ENCODE measurements at regions of chr10 and their contacts with region 1.

Region 1: DNA sequence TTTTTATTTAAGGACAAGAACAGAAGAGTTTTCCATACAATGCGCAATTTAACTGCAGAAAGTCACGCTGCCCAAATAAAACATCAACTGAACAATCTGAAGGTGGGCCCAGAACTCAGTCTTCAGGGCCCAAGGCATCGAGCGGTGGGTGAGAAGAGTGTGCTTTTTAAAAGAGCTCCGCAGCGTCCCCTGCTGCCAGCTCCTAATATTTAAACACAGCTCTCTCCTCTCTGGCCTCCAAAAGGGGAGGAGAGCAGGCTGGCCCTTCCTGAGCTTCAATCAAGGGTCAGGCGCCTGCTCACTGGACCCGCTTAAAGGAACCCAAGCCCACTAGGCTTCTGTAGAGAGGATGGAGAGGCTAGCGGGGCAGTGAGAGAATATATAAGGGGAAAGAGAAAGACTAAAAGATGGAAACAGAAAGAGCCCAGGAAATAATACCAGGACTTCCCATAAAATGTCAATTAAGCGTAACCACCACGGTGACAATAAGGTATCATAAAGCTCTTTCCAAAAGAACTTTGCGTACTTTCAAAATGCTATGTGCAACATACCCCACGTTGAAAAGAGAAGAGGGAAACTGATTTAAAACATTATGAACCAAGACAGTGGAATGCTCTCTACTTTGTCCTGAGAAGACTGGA is 2.8 kb downstream of the FAM53B start:
- DNase-seq: peak; percentile 93

Region 2: GRCh38 chr10:124632064-124632531 is 109.3 kb before region 1 on chr10:
- intact Hi-C with region 1: loop called (anchors 2 kb)
- DNase-seq: no peak

Region 3: GRCh38 chr10:124701435-124701834 is 40.0 kb before region 1 on chr10:
- intact Hi-C with region 1: loop called (anchors 5 kb)
- DNase-seq: peak; percentile 96

Region 4: GRCh38 chr10:124894569-124895215 is 153.3 kb after region 1 on chr10:
- intact Hi-C with region 1: no loop called
- DNase-seq: peak; percentile 43